Natural killer cell (primary cell): ENCODE measurements at regions of chr19 and their contacts with region 1.

Region 1: GRCh38 chr19:57578487-57579205 is at the start of gene ZNF416:
- DNase-seq: peak; percentile 88 to 99
- ATAC-seq: peak; percentile 98
- H3K4me3 ChIP-seq: peak within 1 kb of the TSS; percentile 52
- H3K4me3 Mint-ChIP-seq: peak within 1 kb of the TSS; percentile 85
- H3K27ac ChIP-seq: peak within 1 kb of the TSS; percentile 36
- H3K27ac Mint-ChIP-seq: peak within 1 kb of the TSS; percentile 83 to 91
- H3K4me1 ChIP-seq: peaks cover 15% of the 10 kb centered on the region
- H3K4me1 Mint-ChIP-seq: peaks cover 26 to 27% of the 10 kb centered on the region in 2 donors
- H3K27me3 ChIP-seq: no peaks in the 10 kb centered on the region
- H3K27me3 Mint-ChIP-seq: no peaks in the 10 kb centered on the region
- CTCF ChIP-seq: no peak
- total RNA-seq, gene ZNF416: 1.7 to 5.3 (median 3.3) TPM

Region 2: GRCh38 chr19:57389730-57390598 is 188.7 kb before region 1 on chr19 and contains the start of gene ZNF548:
- intact Hi-C with region 1: loop called (anchors 1 kb)
- DNase-seq: peak; percentile 99
- ATAC-seq: peak; percentile 90 to 98 (median 92)
- H3K4me3 ChIP-seq: peak within 1 kb of the TSS; percentile 81
- H3K4me3 Mint-ChIP-seq: peak within 1 kb of the TSS; percentile 94
- H3K27ac ChIP-seq: peak within 1 kb of the TSS; percentile 95
- H3K27ac Mint-ChIP-seq: peak within 1 kb of the TSS; percentile 97 to 98
- H3K4me1 ChIP-seq: peaks cover 23% of the 10 kb centered on the region
- H3K4me1 Mint-ChIP-seq: peaks cover 37 to 48% of the 10 kb centered on the region in 2 donors
- H3K27me3 ChIP-seq: no peaks in the 10 kb centered on the region
- H3K27me3 Mint-ChIP-seq: peaks cover 0 to 4% of the 10 kb centered on the region in 2 donors
- CTCF ChIP-seq: no peak
- total RNA-seq, gene ZNF548: 75.5 to 104 (median 96.9) TPM

Region 3: DNA sequence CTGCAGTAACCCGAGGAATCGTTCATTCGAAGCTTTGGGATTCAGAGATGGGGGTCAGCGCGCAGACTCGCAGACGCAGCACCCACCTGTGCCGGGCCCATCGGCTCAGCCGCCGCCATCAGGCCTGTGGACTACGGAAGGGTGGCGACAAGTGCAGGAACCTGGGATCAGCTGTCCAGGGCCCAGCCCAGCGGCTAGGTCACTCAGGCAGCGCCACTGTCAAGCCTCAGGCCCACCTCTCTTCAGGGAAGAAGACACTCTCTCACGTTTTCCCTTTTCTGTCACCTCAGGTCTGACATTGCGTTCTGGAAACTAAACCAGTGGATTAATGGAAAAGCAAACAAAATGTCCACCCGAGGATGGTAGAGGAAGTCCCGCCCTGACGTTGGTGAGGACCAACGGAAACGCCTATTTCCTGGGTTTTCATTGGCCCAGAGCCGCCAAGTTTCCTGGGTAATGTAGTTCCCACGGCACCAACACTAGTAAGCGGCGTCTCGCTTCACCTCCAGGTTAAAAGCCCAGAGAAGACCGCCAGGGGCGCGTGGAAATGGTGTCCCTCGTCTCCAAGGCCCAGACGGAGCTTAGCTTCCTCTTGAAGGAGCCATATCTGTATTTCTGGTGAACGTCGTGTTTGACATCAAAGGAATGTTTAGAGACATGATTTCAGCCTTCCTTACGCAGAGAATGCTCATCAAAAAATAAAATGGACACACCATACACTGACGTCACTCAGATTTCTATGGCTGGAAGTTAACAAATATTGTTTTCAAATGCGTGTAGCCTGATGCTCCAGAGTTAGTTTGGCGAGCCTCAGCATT is 101.2 kb before region 1 on chr19 and contains the start of gene ZNF772:
- intact Hi-C with region 1: loop called (anchors 2 kb)
- DNase-seq: peak; percentile 77 to 95
- ATAC-seq: peak; percentile 97 to 100 (median 100)
- H3K4me3 ChIP-seq: peak within 1 kb of the TSS; percentile 63
- H3K4me3 Mint-ChIP-seq: peak within 1 kb of the TSS; percentile 96
- H3K27ac ChIP-seq: peak within 1 kb of the TSS; percentile 75
- H3K27ac Mint-ChIP-seq: peak within 1 kb of the TSS; percentile 94 to 97
- H3K4me1 ChIP-seq: peaks cover 15% of the 10 kb centered on the region
- H3K4me1 Mint-ChIP-seq: peaks cover 18 to 24% of the 10 kb centered on the region in 2 donors
- H3K27me3 ChIP-seq: no peaks in the 10 kb centered on the region
- H3K27me3 Mint-ChIP-seq: peaks cover 8 to 14% of the 10 kb centered on the region in 2 donors
- CTCF ChIP-seq: peak; percentile 50
- total RNA-seq, gene ZNF772: 1.3 to 3.5 (median 1.4) TPM

Region 4: GRCh38 chr19:57559404-57560025 is 19.1 kb before region 1 on chr19 and contains the start of gene ZNF550:
- intact Hi-C with region 1: loop called (anchors 1 kb)
- DNase-seq: peak; percentile 84 to 90
- ATAC-seq: peak; percentile 94 to 99 (median 98)
- H3K4me3 ChIP-seq: peak within 1 kb of the TSS; percentile 93
- H3K4me3 Mint-ChIP-seq: peak within 1 kb of the TSS; percentile 98
- H3K27ac ChIP-seq: peak within 1 kb of the TSS; percentile 65
- H3K27ac Mint-ChIP-seq: peak within 1 kb of the TSS; percentile 87 to 94
- H3K4me1 ChIP-seq: peaks cover 19% of the 10 kb centered on the region
- H3K4me1 Mint-ChIP-seq: peaks cover 33 to 34% of the 10 kb centered on the region in 2 donors
- H3K27me3 ChIP-seq: no peaks in the 10 kb centered on the region
- H3K27me3 Mint-ChIP-seq: peaks cover 0 to 8% of the 10 kb centered on the region in 2 donors
- CTCF ChIP-seq: no peak
- total RNA-seq, gene ZNF550: 11.2 to 12.5 (median 12.1) TPM

Region 5: DNA sequence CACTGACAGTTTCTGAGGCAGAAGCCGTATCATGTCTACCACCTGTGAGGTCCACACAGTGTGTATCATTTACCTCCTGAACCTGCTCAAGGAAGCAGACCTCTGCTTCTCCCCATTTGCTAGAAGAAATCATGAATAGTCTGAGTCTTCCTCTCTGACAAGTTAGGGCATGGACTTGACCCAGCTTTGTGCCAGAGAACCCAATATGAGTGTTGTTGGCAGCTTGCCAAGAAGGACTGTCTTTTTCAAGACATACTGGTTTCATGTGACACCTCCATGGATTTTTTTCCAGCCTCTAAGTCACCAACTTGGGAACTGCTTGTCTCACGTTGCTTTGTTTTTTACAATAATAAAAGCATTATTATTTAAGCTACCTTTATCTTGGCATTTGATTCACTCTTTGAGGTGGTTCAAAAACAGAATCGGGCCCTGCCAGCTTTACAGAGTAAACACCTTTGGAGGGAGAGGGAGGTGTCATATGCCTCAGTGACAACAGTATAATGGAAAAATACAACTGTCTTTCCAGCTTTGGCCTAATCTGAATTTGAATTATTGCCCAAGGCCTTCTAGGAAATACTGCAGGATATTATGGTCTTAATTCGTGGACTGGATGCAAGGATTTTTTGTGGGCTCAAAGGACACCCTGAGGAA is 63.9 kb after region 1 on chr19:
- intact Hi-C with region 1: no loop called
- DNase-seq: no peak
- ATAC-seq: no peak
- H3K4me3 ChIP-seq: no peak overlapping the region
- H3K4me3 Mint-ChIP-seq: no peak overlapping the region
- H3K27ac ChIP-seq: no peak overlapping the region
- H3K27ac Mint-ChIP-seq: no peak overlapping the region
- H3K4me1 ChIP-seq: no peaks in the 10 kb centered on the region
- H3K4me1 Mint-ChIP-seq: no peaks in the 10 kb centered on the region
- H3K27me3 ChIP-seq: no peaks in the 10 kb centered on the region
- H3K27me3 Mint-ChIP-seq: no peaks in the 10 kb centered on the region
- CTCF ChIP-seq: no peak

Region 6: DNA sequence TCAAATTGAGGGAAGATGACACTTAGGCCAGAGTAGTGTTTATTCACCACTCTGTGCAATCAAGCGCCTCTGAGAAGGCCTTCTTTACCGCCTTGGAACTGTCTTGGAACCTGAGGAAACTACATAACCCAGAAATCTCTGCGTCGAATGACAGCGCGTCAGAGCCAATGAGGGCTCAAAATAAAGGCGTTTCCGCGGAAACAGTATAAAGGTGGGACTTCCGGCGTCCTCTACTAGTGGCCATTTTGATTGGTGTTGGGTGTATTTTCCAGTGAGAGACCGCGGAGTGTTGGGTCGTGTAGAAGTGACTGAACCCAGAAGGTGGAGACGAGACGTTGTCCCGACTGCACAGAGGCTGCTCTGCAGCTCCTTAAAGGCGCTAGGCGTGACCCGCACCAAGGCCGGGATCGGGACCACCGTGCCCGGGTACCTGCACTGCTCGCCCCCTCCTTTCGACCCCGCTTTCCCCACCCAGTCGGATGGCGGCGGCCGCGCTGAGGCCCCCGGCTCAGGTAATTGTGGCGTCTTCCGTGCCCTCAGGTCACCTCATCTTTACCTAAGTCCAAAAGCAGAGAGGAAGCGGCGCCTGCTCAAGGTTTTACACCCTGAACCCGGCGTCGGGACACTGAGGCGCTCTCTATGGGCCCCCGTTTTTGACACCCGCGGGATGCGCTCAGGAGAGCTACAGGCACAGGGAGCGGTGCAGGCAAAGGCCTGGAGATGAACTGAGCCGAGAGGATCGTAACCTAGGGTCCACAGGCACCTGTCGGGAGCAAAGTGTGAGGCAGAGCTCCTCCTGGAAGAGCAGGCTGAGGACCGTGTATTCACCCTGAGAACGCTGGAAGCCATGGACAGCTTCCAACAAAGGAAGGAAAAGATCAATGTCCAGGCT is 168.2 kb after region 1 on chr19 and contains the start of gene ZNF776:
- intact Hi-C with region 1: loop called (anchors 1 kb)
- DNase-seq: peak; percentile 73 to 93
- ATAC-seq: peak; percentile 97 to 99 (median 98)
- H3K4me3 ChIP-seq: peak within 1 kb of the TSS; percentile 69
- H3K4me3 Mint-ChIP-seq: peak within 1 kb of the TSS; percentile 93
- H3K27ac ChIP-seq: peak within 1 kb of the TSS; percentile 75
- H3K27ac Mint-ChIP-seq: peak within 1 kb of the TSS; percentile 99
- H3K4me1 ChIP-seq: peaks cover 11% of the 10 kb centered on the region
- H3K4me1 Mint-ChIP-seq: peaks cover 25 to 40% of the 10 kb centered on the region in 2 donors
- H3K27me3 ChIP-seq: no peaks in the 10 kb centered on the region
- H3K27me3 Mint-ChIP-seq: no peaks in the 10 kb centered on the region
- CTCF ChIP-seq: no peak
- total RNA-seq, gene ZNF776: 10.5 to 19.2 (median 18.7) TPM

Region 7: GRCh38 chr19:58042495-58043340 is 464.1 kb after region 1 on chr19:
- intact Hi-C with region 1: no loop called
- DNase-seq: no peak
- ATAC-seq: no peak
- H3K4me3 ChIP-seq: no peak overlapping the region
- H3K4me3 Mint-ChIP-seq: no peak overlapping the region
- H3K27ac ChIP-seq: no peak overlapping the region
- H3K27ac Mint-ChIP-seq: no peak overlapping the region
- H3K4me1 ChIP-seq: no peaks in the 10 kb centered on the region
- H3K4me1 Mint-ChIP-seq: no peaks in the 10 kb centered on the region
- H3K27me3 ChIP-seq: no peaks in the 10 kb centered on the region
- H3K27me3 Mint-ChIP-seq: peaks cover 7% of the 10 kb centered on the region in 2 donors
- CTCF ChIP-seq: no peak